Heart left ventricle (tissue), 16 donors: ENCODE measurements at regions of chr3 and their contacts with region 1.

Region 1: DNA sequence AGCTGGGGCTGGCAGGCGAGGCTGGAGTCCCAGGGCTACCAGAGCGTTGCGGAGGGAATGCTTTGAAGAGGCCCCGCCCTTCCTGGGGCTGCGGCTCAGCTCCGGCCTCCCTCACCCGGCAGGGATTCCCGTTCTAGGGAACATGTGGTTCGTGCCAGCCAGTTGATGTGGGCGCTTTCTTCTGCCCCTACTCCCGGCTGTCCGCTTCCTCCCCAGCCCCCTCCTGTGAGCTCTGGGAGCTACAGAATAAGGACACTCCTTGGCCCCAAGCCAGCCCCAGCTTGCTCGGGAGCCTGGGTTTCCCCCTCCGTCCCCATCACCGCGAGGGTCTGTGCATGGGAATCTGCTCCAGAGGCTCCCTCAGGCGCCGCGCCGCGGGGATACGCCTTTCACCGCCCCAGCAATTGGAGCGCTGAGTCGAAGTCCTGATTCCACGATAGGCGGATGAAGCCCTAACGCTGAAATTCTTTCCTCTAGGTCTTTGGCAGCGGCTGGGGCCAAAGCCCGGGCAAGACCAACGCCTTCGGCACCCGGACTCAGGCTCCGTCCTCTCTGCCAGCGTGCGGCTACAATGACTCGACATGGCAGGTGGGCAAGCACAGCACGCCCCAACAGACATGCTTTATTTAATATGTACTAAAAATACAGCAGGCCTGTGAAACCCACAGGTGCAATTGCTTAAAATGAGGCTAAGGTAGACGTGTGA is 69.5 kb downstream of the KLF15 start:
- DNase-seq: peak; percentile 64 to 87 (median 69)
- ATAC-seq: peak; percentile 92 to 95 (median 94)
- H3K4me3 ChIP-seq: peak overlapping the region; percentile 6 to 61 (median 46)
- H3K27ac ChIP-seq: peak overlapping the region; percentile 71 to 88 (median 82)
- H3K4me1 ChIP-seq: peaks cover 0 to 24% (median 6%) of the 10 kb centered on the region in 12 donors
- H3K27me3 ChIP-seq: peaks cover 0 to 34% (median 0%) of the 10 kb centered on the region in 9 donors
- CTCF ChIP-seq: no peak
- POLR2A ChIP-seq: peak in 1 of 2 donors; percentile 38

Region 2: DNA sequence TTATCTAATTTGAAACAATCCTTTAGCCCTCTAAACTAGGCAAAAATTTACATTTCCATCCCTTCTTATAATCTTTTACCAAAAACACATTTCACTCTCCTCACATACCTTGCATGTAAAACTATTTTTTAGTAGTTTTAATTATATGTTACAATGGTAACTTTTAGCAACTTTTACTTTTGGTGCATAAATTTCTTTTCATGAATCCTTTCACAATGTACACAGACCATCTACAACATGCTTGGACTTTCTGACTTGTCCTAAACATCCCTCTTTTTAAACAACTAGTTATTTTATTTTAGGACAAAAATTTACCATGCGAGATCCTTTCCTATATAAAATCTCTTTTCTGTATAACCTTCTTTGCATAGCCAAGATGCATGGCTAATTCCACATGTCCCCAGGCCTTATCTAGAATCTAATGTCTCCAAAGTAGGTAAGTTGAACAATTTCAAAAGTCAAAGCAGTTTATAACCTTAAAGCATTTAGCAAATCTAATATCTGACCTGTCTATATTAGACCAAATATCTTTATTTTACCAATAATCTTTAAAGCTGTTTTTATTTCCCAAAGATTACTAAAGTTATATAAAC is 92.9 kb before region 1 on chr3:
- intact Hi-C with region 1: no loop called
- DNase-seq: no peak
- ATAC-seq: no peak
- H3K4me3 ChIP-seq: no peak overlapping the region
- H3K27ac ChIP-seq: no peak overlapping the region
- H3K4me1 ChIP-seq: no peaks in the 10 kb centered on the region
- H3K27me3 ChIP-seq: no peaks in the 10 kb centered on the region
- CTCF ChIP-seq: no peak
- POLR2A ChIP-seq: no peak

Region 3: GRCh38 chr3:126226374-126226773 is 61.3 kb before region 1 on chr3:
- intact Hi-C with region 1: no loop called
- DNase-seq: no peak
- ATAC-seq: no peak
- H3K4me3 ChIP-seq: no peak overlapping the region
- H3K27ac ChIP-seq: no peak overlapping the region
- H3K4me1 ChIP-seq: no peaks in the 10 kb centered on the region
- H3K27me3 ChIP-seq: no peaks in the 10 kb centered on the region
- CTCF ChIP-seq: no peak
- POLR2A ChIP-seq: no peak

Region 4: GRCh38 chr3:126267226-126267975 is 20.3 kb before region 1 on chr3:
- intact Hi-C with region 1: loop called in 1 of 10 experiments (anchors 2 kb)
- DNase-seq: peak; percentile 59 to 85 (median 79)
- ATAC-seq: peak; percentile 55 to 74 (median 70)
- H3K4me3 ChIP-seq: peak overlapping the region in 11 of 12 donors; percentile 0 to 47 (median 43)
- H3K27ac ChIP-seq: peak overlapping the region; percentile 52 to 93 (median 89)
- H3K4me1 ChIP-seq: peaks cover 0 to 54% (median 23%) of the 10 kb centered on the region in 12 donors
- H3K27me3 ChIP-seq: peaks cover 0 to 23% (median 0%) of the 10 kb centered on the region in 9 donors
- CTCF ChIP-seq: peak in 4 of 12 donors; percentile 22 to 44 (median 34)
- POLR2A ChIP-seq: peak in 1 of 2 donors; percentile 55